ENCODE measurements at regions of chr1 and their contacts with region 1.

Region 1: GRCh38 chr1:2227346-2228153 is 569 bp upstream of the SKI start:
- DNase-seq: peak; percentile 97
- H3K4me3 Mint-ChIP-seq: peak overlapping the region; percentile 71
- H3K27ac Mint-ChIP-seq: peak overlapping the region; percentile 63
- H3K4me1 Mint-ChIP-seq: peaks cover 17% of the 10 kb centered on the region
- H3K27me3 Mint-ChIP-seq: peaks cover 3% of the 10 kb centered on the region

Region 2: GRCh38 chr1:2163205-2163604 is 64.3 kb before region 1 on chr1:
- CTCF ChIA-PET with region 1: no interaction called
- POLR2A ChIA-PET with region 1: no interaction called
- DNase-seq: no peak
- H3K4me3 Mint-ChIP-seq: no peak overlapping the region
- H3K27ac Mint-ChIP-seq: no peak overlapping the region
- H3K4me1 Mint-ChIP-seq: no peaks in the 10 kb centered on the region
- H3K27me3 Mint-ChIP-seq: no peaks in the 10 kb centered on the region

Region 3: DNA sequence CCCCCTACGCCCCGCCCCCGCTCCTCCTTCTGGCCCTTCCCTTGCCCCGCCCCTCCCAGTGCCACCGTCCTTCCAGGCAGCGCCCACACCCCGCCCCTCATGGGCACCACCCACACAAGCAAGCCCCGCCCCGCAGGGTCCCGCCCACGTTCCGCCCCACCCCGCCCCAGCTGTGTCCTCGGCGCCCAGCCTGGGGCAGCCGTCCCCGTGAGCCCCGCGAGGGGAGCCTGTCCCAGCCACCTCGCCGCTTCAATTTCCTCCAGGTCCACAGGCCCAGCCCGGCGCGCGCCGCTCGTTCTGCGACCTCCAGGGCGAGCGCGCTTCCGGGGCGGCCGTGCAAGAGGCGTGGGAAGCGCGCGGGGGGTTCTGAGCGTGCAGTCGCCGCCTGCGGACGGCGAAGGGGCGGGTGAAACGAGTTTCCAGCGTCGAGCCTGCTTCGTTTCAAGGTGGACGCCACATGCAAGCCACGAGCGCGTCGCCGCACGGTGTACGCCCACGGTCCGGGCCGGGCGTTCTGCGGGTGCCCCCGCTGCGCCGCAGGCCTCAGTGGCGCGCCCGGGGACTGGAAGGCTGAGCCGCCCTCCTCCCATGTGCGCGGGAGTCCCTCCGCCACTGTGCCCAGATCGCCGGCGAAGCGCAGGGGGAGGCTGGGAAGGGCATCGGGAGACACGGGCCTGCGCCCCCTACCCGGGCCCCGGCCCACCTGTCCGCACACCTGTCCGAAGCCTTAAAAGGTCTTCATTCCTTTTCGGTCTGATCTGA is 22.2 kb before region 1 on chr1:
- CTCF ChIA-PET with region 1: no interaction called
- POLR2A ChIA-PET with region 1: interaction called, 50 read pairs
- DNase-seq: peak; percentile 96
- H3K4me3 Mint-ChIP-seq: peak overlapping the region; percentile 63
- H3K27ac Mint-ChIP-seq: no peak overlapping the region
- H3K4me1 Mint-ChIP-seq: peaks cover 10% of the 10 kb centered on the region
- H3K27me3 Mint-ChIP-seq: peaks cover 4% of the 10 kb centered on the region

Region 4: DNA sequence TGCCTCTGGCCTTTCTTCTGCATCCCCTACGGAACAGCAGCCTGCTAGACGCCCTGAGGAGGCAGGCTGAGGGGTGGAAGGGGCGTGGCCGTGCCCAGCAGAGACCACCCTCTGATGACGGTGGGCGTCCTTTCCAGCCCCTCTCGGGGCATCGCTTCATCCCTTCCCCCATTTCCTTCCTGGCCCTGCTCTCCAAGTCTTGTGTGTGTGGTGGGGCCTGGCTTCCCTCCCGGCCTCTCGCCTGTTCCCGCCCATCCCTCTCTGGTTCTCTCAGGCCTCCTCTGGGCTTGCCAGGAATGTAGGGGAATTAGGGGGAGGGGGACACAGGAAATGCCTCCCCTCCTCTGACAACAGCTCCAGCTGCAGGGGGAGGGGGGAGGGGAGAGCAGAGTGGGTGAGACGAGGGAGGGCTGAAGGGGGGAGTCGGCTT is 51.7 kb after region 1 on chr1:
- CTCF ChIA-PET with region 1: no interaction called
- POLR2A ChIA-PET with region 1: no interaction called
- DNase-seq: no peak
- H3K4me3 Mint-ChIP-seq: no peak overlapping the region
- H3K27ac Mint-ChIP-seq: no peak overlapping the region
- H3K4me1 Mint-ChIP-seq: peaks cover 19% of the 10 kb centered on the region
- H3K27me3 Mint-ChIP-seq: no peaks in the 10 kb centered on the region

Region 5: GRCh38 chr1:2290595-2291510 is 63.3 kb after region 1 on chr1:
- CTCF ChIA-PET with region 1: interaction called, 3 read pairs
- POLR2A ChIA-PET with region 1: interaction called, 148 read pairs
- DNase-seq: peak; percentile 92
- H3K4me3 Mint-ChIP-seq: peak overlapping the region; percentile 74
- H3K27ac Mint-ChIP-seq: peak overlapping the region; percentile 97
- H3K4me1 Mint-ChIP-seq: peaks cover 85% of the 10 kb centered on the region
- H3K27me3 Mint-ChIP-seq: no peaks in the 10 kb centered on the region

Region 6: DNA sequence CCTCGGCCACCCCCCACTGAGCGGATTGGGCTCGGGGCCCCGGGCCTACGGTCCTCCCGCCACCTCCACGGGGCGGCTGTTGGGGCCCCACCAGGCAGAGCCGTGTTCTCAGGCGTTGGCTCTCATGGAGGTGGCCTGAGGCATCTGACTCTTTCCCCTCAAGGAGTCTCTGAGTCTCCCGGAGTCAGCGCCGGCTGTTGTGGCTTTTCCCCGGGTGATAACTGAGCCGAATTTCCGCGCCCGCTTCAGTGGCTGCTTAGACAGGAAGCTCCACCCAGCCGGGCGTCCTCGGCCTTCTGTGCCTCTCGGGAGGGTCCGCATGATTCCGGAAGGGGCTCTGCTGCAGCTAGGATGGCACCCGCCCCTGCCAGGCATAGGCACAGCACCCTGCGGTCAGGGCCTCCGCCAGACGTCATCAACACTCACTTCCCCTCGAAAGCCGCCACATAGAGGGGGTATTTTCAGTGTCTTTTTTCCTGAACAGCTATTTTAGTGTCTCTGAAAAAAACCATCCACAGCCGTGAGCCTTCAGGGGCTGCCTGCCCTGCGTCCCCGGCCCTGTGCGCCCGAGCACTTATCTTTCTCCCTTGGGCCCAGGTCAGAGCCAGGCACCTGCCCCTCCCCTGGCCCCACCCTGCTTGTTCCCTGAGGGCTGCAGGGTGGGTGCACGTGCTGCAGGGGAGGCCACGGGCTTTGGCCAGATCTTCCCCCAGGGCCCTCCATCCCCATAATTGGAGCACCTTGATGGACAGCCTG is 73.5 kb after region 1 on chr1:
- CTCF ChIA-PET with region 1: interaction called, 9 read pairs
- POLR2A ChIA-PET with region 1: interaction called, 148 read pairs
- DNase-seq: peak; percentile 95
- H3K4me3 Mint-ChIP-seq: peak overlapping the region; percentile 71
- H3K27ac Mint-ChIP-seq: peak overlapping the region; percentile 97
- H3K4me1 Mint-ChIP-seq: peaks cover 68% of the 10 kb centered on the region
- H3K27me3 Mint-ChIP-seq: no peaks in the 10 kb centered on the region

Region 7: DNA sequence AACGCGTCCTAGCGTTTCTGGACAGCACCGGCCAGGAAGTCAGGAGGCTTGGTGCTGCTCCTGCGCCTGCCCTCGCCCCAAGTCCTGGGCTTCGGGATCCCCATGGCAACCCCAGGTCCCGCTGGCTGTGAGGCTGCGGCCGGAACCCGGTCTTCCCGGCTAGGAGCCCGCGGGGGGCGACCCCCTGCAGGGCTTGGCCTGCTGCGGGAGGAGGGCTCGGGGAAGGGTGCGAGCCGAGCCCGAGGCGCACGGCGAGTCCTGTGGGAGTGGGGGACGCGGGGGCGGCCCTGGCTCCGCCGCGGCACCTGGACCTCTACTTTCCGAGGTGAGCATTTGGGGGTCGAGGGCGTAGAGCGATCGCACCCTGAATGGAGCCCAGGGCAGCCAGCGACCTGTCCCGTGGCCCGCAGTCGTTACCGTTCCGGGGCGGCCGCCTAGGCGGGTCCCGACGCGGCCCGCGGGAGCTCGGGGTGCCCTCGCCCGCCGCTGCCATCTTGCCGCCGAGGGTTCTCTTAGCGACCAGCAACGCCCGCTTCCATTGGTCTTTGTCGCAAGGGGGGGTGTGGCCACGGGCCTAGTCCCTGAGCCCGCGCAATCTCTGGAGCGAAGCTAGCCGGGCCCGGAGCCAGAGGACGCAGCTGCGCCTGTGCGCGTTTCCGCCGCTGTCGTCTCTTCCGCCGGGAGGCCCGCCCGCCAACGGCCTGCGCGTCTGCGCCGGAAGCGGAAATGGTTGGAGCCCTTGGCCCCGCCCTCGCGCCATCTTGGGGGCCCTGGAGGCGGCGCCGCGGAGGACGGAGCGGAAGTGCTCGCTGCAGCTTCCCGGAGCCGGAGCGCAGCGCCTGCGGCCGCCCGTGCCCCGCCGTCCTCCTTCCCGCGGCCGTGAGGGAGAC is 163.7 kb after region 1 on chr1 and contains the starts of genes MORN1 and RER1:
- CTCF ChIA-PET with region 1: no interaction called
- POLR2A ChIA-PET with region 1: interaction called, 21 read pairs
- DNase-seq: peak; percentile 99
- H3K4me3 Mint-ChIP-seq: peak within 1 kb of the TSS; percentile 85
- H3K27ac Mint-ChIP-seq: peak within 1 kb of the TSS; percentile 79
- H3K4me1 Mint-ChIP-seq: peaks cover 45% of the 10 kb centered on the region
- H3K27me3 Mint-ChIP-seq: no peaks in the 10 kb centered on the region
- total RNA-seq, gene MORN1: 6.2 to 6.3 TPM
- total RNA-seq, gene RER1: 151 to 160 TPM

Region 8: GRCh38 chr1:2587071-2587865 is 359.7 kb after region 1 on chr1:
- CTCF ChIA-PET with region 1: no interaction called
- POLR2A ChIA-PET with region 1: no interaction called
- DNase-seq: peak; percentile 43
- H3K4me3 Mint-ChIP-seq: peak overlapping the region; percentile 88
- H3K27ac Mint-ChIP-seq: no peak overlapping the region
- H3K4me1 Mint-ChIP-seq: peaks cover 28% of the 10 kb centered on the region
- H3K27me3 Mint-ChIP-seq: no peaks in the 10 kb centered on the region